ENCODE measurements at regions of chr4 and their contacts with region 1.

Region 1: GRCh38 chr4:152535903-152536544 is at the start of gene FBXW7:
- DNase-seq: peak; percentile 98
- ATAC-seq: peak; percentile 93
- H3K4me3 ChIP-seq: peak within 1 kb of the TSS; percentile 82 to 96 (median 91)
- H3K27ac ChIP-seq: peak within 1 kb of the TSS; percentile 97
- H3K4me1 ChIP-seq: peaks cover 46% of the 10 kb centered on the region
- H3K27me3 ChIP-seq: no peaks in the 10 kb centered on the region; a peak in 2 of 5 replicates
- CTCF ChIP-seq: no peak; the same call in none of the 2 replicates
- EP300 ChIP-seq: peak in 1 of 2 experiments; percentile 12; a peak in 2 of 4 replicates
- POLR2A ChIP-seq: peak; percentile 75 to 76
- RAD21 ChIP-seq: peak; percentile 41; the same call in 1 of the 2 replicates
- total RNA-seq, gene FBXW7: 21.7 and 40.9 TPM in 2 replicates

Region 2: GRCh38 chr4:152485726-152486276 is 50.2 kb before region 1 on chr4:
- CTCF ChIA-PET with region 1: no interaction called
- POLR2A ChIA-PET with region 1: interaction called, 12 read pairs
- in situ Hi-C with region 1: no loop called
- intact Hi-C with region 1: loop called (anchors 10 kb)
- DNase-seq: peak; percentile 97
- ATAC-seq: peak; percentile 99
- H3K4me3 ChIP-seq: peak overlapping the region; percentile 35 to 68 (median 65); a peak in 4 of 6 replicates
- H3K27ac ChIP-seq: peak overlapping the region; percentile 92
- H3K4me1 ChIP-seq: peaks cover 74% of the 10 kb centered on the region
- H3K27me3 ChIP-seq: no peaks in the 10 kb centered on the region
- CTCF ChIP-seq: no peak
- EP300 ChIP-seq: peak in 1 of 2 experiments; percentile 82; a peak in 2 of 4 replicates
- POLR2A ChIP-seq: peak in 1 of 2 experiments; percentile 46; a peak in 1 of 4 replicates
- RAD21 ChIP-seq: no peak

Measured in HepG2 (cell line).